GM23248 (cell line): ENCODE measurements at regions of chr1 and their contacts with region 1.

Region 1: DNA sequence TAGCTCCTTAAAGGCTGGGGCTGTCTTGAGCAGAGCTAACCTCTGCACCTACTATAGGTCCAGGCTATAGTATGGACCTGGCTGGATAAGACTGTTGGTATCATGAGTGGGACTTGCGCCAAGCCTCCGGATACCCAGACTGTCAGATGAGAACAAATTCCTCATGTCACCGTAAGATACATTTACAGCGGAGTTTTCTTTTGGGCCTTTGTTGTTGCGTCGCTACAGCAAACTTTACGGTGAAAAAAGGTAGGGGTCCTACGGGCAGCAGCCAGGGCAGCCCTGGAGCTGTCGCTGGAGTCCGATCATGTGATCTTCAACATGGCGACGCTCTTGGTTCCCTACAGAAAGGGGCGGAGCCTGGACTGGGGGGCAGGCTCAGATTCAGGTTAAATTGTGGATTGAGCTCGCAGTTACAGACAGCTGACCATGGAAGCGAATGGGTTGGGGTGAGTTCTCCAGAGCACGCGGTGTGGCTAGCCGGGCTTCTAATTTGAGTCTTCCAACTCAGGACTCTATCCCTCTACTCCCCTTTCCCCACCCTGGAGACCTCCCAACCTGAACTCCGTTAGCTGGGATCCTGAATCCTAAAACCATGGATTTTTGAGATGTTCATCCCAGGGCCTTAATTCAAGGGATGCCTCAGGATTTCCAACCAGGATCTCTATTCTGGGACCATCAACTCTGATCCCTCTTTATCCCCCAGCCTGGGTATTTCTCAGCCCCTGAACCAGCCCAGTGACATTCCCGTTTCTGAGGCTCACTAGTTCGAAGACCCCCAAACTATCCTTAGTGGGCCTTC is at the start of gene UROD:
- DNase-seq: peak; percentile 99
- H3K4me3 ChIP-seq: peak within 1 kb of the TSS; percentile 82
- H3K27ac ChIP-seq: peak within 1 kb of the TSS; percentile 73
- H3K4me1 ChIP-seq: peaks cover 16% of the 10 kb centered on the region
- H3K27me3 ChIP-seq: no peaks in the 10 kb centered on the region
- total RNA-seq, gene UROD: 103 and 111 TPM in 2 replicates

Region 2: GRCh38 chr1:44835738-44836675 is 176.0 kb before region 1 on chr1:
- in situ Hi-C with region 1: loop called (anchors 10 kb)
- DNase-seq: peak; percentile 74
- H3K4me3 ChIP-seq: no peak overlapping the region
- H3K27ac ChIP-seq: no peak overlapping the region
- H3K4me1 ChIP-seq: no peaks in the 10 kb centered on the region
- H3K27me3 ChIP-seq: no peaks in the 10 kb centered on the region